ENCODE measurements at regions of chr4 and their contacts with region 1.

Region 1: GRCh38 chr4:152045807-152046571 is 285.2 kb upstream of the GATB start:
- DNase-seq: peak in 1 of 2 donors; percentile 28
- ATAC-seq: peak; percentile 44 to 84
- H3K4me3 ChIP-seq: peak overlapping the region; percentile 27 to 47 (median 30)
- H3K27ac ChIP-seq: peak overlapping the region in 3 of 4 donors; percentile 16 to 65 (median 40)
- H3K4me1 ChIP-seq: peaks cover 0 to 10% of the 10 kb centered on the region in 2 donors
- H3K27me3 ChIP-seq: no peaks in the 10 kb centered on the region
- CTCF ChIP-seq: peak in 4 of 5 experiments; percentile 39 to 74 (median 61)
- POLR2A ChIP-seq: no peak

Region 2: DNA sequence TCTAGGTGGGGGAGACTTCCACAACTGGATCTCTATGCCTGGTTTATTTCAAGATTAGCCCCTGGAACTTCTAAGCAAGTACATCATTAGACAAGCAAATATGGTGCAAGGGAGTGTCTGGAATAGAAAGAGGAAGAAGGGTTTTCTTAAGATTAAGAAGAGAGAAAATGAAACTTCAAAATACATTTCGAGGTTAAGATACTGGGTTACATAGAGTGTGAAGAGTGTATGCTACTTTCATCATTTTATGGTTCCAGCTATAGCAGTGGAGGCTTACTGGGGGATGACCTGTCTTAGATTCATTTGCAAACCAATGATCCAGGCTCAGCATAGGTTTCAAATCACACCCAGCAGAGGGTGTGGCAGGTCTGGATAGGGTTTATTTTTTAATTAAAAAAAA is 140.8 kb before region 1 on chr4:
- in situ Hi-C with region 1: no loop called
- intact Hi-C with region 1: no loop called
- DNase-seq: no peak
- ATAC-seq: no peak
- H3K4me3 ChIP-seq: no peak overlapping the region
- H3K27ac ChIP-seq: no peak overlapping the region
- H3K4me1 ChIP-seq: no peaks in the 10 kb centered on the region
- H3K27me3 ChIP-seq: no peaks in the 10 kb centered on the region
- CTCF ChIP-seq: no peak
- POLR2A ChIP-seq: no peak

Region 3: GRCh38 chr4:152189451-152190179 is 143.6 kb after region 1 on chr4:
- in situ Hi-C with region 1: no loop called
- intact Hi-C with region 1: loop called (anchors 5 kb)
- DNase-seq: no peak
- ATAC-seq: no peak
- H3K4me3 ChIP-seq: no peak overlapping the region
- H3K27ac ChIP-seq: no peak overlapping the region
- H3K4me1 ChIP-seq: peaks cover 15 to 30% of the 10 kb centered on the region in 2 donors
- H3K27me3 ChIP-seq: no peaks in the 10 kb centered on the region
- CTCF ChIP-seq: no peak
- POLR2A ChIP-seq: no peak